ENCODE measurements at regions of chr10 and their contacts with region 1.

Region 1: DNA sequence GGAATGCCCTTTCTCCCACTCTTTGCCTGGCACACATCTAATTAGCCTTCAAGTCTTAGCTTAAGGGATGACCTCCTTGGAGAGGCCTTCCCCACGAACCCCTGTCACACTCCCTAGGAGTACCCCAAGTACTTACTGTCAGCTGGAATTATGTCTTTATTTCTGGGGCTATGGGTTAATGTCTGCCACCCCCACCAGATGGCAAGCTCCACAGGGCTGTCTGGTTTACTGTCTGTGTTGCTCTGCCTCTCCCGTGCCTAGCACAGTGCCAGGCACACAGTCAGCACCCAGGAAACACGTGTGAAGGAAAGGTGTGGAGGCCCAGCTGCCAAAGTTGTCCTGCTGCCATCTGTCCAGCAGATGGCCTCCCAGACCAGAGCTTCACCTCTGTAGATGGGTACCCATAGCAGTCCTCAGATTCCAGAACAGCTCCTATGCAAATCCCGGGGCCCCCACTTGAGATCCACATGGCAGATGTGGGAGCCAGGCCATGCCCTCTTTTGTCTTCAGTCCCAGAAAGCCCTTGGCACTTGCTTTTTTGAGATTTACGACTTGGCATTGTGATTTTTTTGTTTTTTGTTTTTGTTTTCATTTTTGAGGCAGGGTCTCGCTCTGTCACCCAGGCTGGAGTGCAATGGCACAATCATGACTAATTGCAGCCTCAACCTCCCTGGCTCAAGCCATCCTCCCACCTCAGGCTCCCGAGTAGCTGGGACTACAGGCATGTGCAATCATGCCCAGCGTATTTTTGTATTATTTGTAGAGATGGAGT is 17.2 kb upstream of the PALD1 start:
- H3K4me3 ChIP-seq: no peak overlapping the region
- H3K27ac ChIP-seq: no peak overlapping the region
- H3K4me1 ChIP-seq: peaks cover 6% of the 10 kb centered on the region
- CTCF ChIP-seq: peak; percentile 74

Region 2: GRCh38 chr10:70348228-70348850 is 113.1 kb before region 1 on chr10:
- CTCF ChIA-PET with region 1: no interaction called
- POLR2A ChIA-PET with region 1: no interaction called
- H3K4me3 ChIP-seq: no peak overlapping the region
- H3K27ac ChIP-seq: no peak overlapping the region
- H3K4me1 ChIP-seq: no peaks in the 10 kb centered on the region
- CTCF ChIP-seq: 0 out of 2 replicates have a peak, but pooled peaks have one; percentile 29

Region 3: GRCh38 chr10:70430493-70431445 is 30.6 kb before region 1 on chr10:
- CTCF ChIA-PET with region 1: interaction called, 17 read pairs
- POLR2A ChIA-PET with region 1: no interaction called
- H3K4me3 ChIP-seq: no peak overlapping the region
- H3K27ac ChIP-seq: no peak overlapping the region
- H3K4me1 ChIP-seq: no peaks in the 10 kb centered on the region
- CTCF ChIP-seq: no peak; the same call in 1 of the 2 replicates

Region 4: DNA sequence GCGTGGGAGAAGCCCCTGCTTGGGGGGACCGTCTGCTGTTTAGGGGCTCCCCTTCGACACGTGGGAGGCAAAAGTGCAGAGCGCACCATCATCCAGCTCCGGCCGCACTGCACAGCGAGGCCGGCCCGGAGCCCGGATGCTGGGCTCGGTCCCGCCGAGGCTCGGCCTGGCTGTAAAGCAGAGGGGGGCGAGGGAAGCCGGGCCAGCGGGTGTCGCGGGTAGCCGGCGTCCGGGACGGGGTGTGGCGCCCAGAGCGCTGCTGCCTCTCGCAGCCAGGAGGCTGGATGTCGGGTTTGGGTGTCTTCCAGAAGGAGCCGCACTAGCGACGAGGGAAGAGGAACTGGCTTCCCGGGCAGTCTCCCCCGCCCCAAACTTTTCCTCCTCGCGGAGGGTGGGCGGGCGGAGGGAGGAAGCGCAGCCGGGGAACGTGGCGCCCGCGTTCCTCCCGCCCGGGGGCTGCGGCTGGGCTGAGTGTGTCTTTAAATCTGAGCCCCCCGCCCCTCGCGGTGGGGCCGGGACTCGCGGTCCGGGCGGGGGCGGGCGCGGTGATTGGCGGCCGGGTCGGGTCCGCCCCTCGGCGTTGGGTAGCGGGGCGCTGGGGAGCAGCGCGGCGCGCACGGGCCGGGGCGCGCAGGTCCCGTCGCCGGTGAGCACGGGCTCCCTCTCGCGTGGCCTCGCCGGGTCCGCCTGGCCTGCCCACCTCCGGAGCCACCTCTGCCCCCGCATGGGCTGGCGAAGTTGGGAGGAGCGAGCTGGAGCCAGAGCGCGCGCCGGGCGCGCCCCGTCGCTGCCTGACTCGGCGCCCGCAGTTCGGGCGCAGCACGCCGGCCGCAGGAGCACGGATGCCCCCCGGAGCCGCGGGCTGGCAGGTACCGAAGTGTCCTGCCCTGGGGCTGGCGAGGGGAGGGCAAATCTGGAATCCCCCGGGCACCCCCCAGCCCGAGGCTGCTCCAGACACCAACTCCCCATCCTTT is 17.1 kb after region 1 on chr10 and contains the start of gene PALD1:
- CTCF ChIA-PET with region 1: interaction called, 20 read pairs
- POLR2A ChIA-PET with region 1: interaction called, 5 read pairs
- H3K4me3 ChIP-seq: peak within 1 kb of the TSS; percentile 43
- H3K27ac ChIP-seq: peak within 1 kb of the TSS; percentile 66; the same call in 1 of the 2 replicates
- H3K4me1 ChIP-seq: peaks cover 6% of the 10 kb centered on the region
- CTCF ChIP-seq: peak; percentile 60; the same call in 1 of the 2 replicates

Region 5: GRCh38 chr10:70528726-70529362 is 67.4 kb after region 1 on chr10:
- CTCF ChIA-PET with region 1: interaction called, 13 read pairs
- POLR2A ChIA-PET with region 1: no interaction called
- H3K4me3 ChIP-seq: no peak overlapping the region
- H3K27ac ChIP-seq: no peak overlapping the region
- H3K4me1 ChIP-seq: no peaks in the 10 kb centered on the region
- CTCF ChIP-seq: no peak

Region 6: DNA sequence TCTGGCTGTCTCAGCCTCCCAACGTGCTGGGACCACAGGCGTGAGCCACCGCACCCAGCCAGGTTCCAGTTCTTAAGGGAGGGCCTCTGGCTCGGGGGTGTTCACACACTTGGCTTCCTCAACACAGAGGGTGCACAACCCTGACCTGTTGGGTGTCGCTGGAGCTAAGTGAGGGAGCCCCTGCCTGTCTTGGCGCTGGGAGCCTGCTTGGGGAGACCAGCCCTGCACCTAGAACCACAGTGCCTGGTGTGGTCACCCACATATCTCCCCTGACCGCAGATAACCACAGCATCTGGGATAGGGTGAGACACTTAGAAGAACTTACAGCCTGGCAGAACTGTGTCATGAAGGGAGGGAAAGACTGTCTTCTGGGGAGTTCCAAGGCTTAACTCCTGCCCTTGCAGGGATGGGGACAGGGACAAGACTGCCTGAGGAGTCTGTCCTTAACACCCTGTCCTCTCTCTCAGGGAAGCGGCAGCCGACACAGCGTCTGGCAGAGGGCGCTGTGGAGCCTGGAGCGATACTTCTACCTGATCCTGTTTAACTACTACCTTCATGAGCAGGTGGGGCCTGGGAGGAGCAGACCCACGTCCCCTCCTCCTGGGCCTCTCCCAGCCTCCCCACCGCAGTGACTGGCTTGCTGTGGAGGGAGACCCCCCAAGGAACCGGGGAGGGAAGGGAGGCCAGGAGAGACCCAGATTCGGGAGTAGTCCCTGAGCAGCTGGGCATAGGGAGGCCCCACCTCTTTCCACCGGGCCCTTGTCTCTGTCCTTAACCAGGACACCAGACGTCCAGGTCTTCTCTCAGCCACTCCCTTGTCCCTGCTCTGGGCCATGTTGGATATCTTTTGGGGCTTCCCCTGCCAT is 76.2 kb after region 1 on chr10:
- CTCF ChIA-PET with region 1: interaction called, 27 read pairs
- POLR2A ChIA-PET with region 1: interaction called, 3 read pairs
- H3K4me3 ChIP-seq: no peak overlapping the region
- H3K27ac ChIP-seq: no peak overlapping the region
- H3K4me1 ChIP-seq: no peaks in the 10 kb centered on the region
- CTCF ChIP-seq: no peak

Region 7: DNA sequence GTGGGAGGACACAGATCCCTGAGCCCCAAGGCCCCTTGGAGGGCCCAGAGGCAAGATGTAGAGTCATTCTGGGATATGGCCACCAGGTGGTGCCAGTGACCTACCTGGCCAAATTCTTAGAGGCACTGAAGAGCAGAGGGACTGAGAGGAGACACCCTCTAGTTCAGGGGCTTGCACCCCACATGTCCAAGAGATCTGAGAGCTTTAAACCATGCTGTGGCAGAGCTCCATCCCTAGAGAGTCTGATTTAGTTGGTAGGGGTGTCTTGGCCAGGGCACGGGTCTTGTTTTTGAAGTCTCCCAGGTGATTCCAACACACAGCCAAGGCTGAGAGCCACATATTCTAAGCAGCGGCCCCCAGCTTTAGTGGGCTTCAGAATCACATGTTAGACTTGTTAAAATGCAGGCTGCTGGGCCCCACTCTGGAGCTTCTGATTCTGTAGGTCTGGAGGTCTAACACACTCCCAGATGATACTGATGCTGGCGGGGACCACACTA is 88.6 kb after region 1 on chr10:
- CTCF ChIA-PET with region 1: interaction called, 25 read pairs
- POLR2A ChIA-PET with region 1: no interaction called
- H3K4me3 ChIP-seq: no peak overlapping the region
- H3K27ac ChIP-seq: no peak overlapping the region
- H3K4me1 ChIP-seq: 0 out of 2 replicates have a peak, but pooled peaks cover 2% of the 10 kb centered on the region
- CTCF ChIP-seq: peak; percentile 82